Aorta (tissue), 5 donors: ENCODE measurements at regions of chr13 and their contacts with region 1.

Region 1: DNA sequence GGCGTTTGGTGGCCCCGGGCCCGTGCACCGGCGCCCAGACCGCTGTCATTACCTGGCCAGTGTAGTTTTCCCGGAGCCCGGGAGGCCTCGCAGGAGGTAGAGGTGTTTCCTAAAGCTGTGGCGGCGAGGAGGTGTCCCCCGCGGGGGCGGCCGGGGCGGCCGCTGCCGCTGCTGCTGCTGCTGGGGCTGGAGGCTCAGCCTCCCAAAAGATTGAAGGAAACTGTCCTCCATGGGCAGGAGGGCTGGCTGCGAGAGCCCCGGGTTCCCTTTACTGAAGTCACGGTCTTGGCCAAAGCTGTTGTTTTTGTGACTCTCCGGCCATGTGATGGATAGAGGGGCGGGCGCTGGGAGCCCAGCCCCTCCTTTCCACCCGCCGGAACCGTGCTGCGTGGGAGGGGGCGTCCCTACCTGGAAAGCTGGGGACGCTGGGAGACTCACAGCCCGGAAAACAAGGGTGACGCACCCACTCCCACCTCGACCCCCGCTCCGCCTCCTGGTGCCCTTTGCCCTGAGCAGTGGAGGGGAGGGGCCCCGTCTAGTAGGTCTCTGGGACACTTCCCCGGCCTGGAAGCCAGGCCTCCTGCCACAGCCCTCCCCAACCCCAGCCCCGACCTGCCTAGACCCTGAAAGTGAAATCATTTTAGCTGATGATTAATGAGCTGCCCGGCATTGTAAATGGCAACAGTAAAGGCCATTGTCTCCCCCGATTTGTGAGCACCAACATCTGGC is at the start of gene N4BP2L1:
- DNase-seq: peak; percentile 87 to 91
- ATAC-seq: peak; percentile 92
- H3K4me3 ChIP-seq: peak within 1 kb of the TSS; percentile 48 to 98
- H3K27ac ChIP-seq: peak within 1 kb of the TSS; percentile 46 to 58
- H3K4me1 ChIP-seq: no peaks in the 10 kb centered on the region
- H3K27me3 ChIP-seq: no peaks in the 10 kb centered on the region
- total RNA-seq, gene N4BP2L1: 18.2 to 32.2 TPM

Region 2: DNA sequence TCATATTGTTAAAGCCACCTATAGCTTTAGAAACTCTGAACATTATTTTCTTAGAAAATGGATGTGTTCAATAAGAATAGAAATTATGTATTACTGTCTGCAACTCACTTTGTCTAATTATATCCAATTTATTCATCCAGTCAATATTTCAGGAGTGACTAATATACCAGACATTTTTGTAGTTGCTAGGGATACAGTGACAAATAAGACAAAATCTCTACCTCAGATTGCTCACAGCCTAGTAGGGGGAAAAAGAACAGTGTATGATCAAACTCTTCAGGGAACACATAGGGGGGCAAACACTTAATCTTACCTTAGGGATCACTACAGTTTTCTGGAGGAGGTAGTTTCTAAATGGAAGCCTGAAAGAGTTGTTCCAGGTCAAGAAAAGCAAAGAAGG is 104.1 kb before region 1 on chr13:
- intact Hi-C with region 1: loop called in 1 of 2 experiments (anchors 5 kb)
- DNase-seq: no peak
- ATAC-seq: no peak
- H3K4me3 ChIP-seq: no peak overlapping the region
- H3K27ac ChIP-seq: no peak overlapping the region
- H3K4me1 ChIP-seq: peaks cover 0 to 2% of the 10 kb centered on the region in 2 donors
- H3K27me3 ChIP-seq: no peaks in the 10 kb centered on the region

Region 3: DNA sequence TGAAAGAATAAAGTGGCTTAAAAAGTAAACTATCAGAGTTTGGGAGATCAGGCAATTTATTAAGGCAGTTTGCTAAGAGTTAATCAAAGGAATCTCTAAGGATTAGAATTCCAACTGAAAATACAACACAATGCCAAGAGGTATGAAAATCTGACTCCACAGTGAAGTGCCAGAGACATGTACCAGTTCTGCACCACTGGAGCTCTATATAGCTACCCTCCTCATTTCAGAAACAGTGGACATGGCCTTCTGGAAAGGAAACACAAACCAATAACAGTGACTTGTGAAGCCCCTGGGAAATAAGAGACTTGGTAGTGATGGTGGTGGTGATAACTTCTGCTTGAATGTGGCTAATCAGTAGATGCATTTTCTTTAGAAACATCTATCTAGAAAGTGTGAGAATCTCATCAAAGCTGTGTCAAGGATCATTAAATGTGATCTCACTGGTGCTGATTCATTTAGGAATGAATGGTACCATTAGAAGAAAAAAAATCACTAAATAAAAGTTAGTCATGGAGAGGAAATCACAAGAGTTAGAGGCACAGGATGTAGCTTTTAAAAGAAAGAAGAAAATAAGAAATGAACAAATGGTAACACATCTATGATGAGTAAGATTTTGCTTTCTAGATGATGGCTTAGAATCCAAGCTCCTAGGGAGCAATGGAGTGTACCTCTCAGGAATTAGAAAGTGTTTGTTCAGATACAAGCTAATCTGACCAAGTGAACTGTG is 20.0 kb after region 1 on chr13:
- intact Hi-C with region 1: no loop called
- DNase-seq: no peak
- ATAC-seq: no peak
- H3K4me3 ChIP-seq: no peak overlapping the region
- H3K27ac ChIP-seq: no peak overlapping the region
- H3K4me1 ChIP-seq: no peaks in the 10 kb centered on the region
- H3K27me3 ChIP-seq: no peaks in the 10 kb centered on the region

Region 4: GRCh38 chr13:32759152-32759551 is 331.1 kb after region 1 on chr13:
- intact Hi-C with region 1: no loop called
- DNase-seq: no peak
- ATAC-seq: no peak
- H3K4me3 ChIP-seq: no peak overlapping the region
- H3K27ac ChIP-seq: no peak overlapping the region
- H3K4me1 ChIP-seq: no peaks in the 10 kb centered on the region
- H3K27me3 ChIP-seq: no peaks in the 10 kb centered on the region